PC-3 (cell line): ENCODE measurements at regions of chr7 and their contacts with region 1.

Region 1: GRCh38 chr7:129664029-129665012 is 52.8 kb downstream of the NRF1 start:
- DNase-seq: peak; percentile 68
- ATAC-seq: peak; percentile 76
- H3K4me3 ChIP-seq: no peak overlapping the region
- H3K27ac ChIP-seq: peak overlapping the region; percentile 68
- H3K4me1 ChIP-seq: peaks cover 30% of the 10 kb centered on the region
- H3K27me3 ChIP-seq: no peaks in the 10 kb centered on the region
- CTCF ChIP-seq: peak; percentile 77

Region 2: GRCh38 chr7:129739427-129739826 is 75.1 kb after region 1 on chr7:
- CTCF ChIA-PET with region 1: no interaction called
- POLR2A ChIA-PET with region 1: no interaction called
- intact Hi-C with region 1: loop called (anchors 1 kb)
- DNase-seq: peak; percentile 84
- ATAC-seq: peak; percentile 91
- H3K4me3 ChIP-seq: no peak overlapping the region
- H3K27ac ChIP-seq: peak overlapping the region; percentile 70
- H3K4me1 ChIP-seq: peaks cover 27% of the 10 kb centered on the region
- H3K27me3 ChIP-seq: no peaks in the 10 kb centered on the region
- CTCF ChIP-seq: no peak

Region 3: GRCh38 chr7:129755555-129755954 is 91.2 kb after region 1 on chr7:
- CTCF ChIA-PET with region 1: no interaction called
- POLR2A ChIA-PET with region 1: no interaction called
- intact Hi-C with region 1: loop called (anchors 5 kb)
- DNase-seq: no peak
- ATAC-seq: 0 out of 2 replicates have a peak, but pooled peaks have one; percentile 39
- H3K4me3 ChIP-seq: no peak overlapping the region
- H3K27ac ChIP-seq: no peak overlapping the region
- H3K4me1 ChIP-seq: no peaks in the 10 kb centered on the region
- H3K27me3 ChIP-seq: no peaks in the 10 kb centered on the region
- CTCF ChIP-seq: 0 out of 2 replicates have a peak, but pooled peaks have one; percentile 8